ENCODE measurements at regions of chr22 and their contacts with region 1.

Region 1: GRCh38 chr22:27863001-27863400 is 56.1 kb downstream of the PITPNB start:
- DNase-seq: no peak
- ATAC-seq: no peak
- H3K4me3 Mint-ChIP-seq: no peak overlapping the region
- H3K27ac Mint-ChIP-seq: no peak overlapping the region
- H3K4me1 Mint-ChIP-seq: peaks cover 20% of the 10 kb centered on the region
- H3K27me3 Mint-ChIP-seq: no peaks in the 10 kb centered on the region
- CTCF ChIP-seq: no peak

Region 2: DNA sequence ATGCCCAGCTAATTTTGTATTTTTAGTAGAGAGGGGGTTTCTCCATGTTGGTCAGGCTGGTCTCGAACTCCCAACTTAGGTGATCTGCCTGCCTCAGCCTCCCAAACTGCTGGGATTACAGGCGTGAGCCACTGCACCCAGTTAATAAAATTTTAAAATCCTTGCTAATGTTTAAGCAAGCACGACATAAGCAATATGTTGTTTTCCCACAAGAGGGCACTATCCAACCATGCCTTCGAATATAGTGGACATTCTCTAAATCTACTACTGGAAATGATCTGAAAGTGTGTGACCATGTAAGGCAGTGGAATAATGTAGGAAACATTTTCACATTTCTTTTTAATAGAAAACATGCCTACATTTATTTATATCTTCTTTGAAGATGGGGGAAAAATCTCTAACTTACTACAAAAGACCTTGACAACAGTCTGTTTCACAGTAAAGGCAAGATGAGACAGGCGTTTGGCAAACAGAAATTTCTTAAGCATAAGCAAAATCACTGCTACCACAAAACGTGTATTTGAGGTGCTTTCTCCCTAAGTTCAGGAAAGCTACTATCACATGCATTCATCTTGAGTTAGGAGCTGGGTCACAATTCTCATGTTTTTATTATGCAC is 17.9 kb after region 1 on chr22:
- CTCF ChIA-PET with region 1: interaction called, 11 read pairs
- POLR2A ChIA-PET with region 1: no interaction called
- DNase-seq: no peak
- ATAC-seq: peak; percentile 28
- H3K4me3 Mint-ChIP-seq: no peak overlapping the region
- H3K27ac Mint-ChIP-seq: peak overlapping the region; percentile 33; the same call in 1 of the 2 replicates
- H3K4me1 Mint-ChIP-seq: peaks cover 81% of the 10 kb centered on the region
- H3K27me3 Mint-ChIP-seq: no peaks in the 10 kb centered on the region
- CTCF ChIP-seq: peak; percentile 47